ENCODE measurements at regions of chr2 and their contacts with region 1.

Region 1: GRCh38 chr2:164937864-164938401 is 17.4 kb downstream of the SLC38A11 start:
- DNase-seq: no peak
- H3K4me3 Mint-ChIP-seq: peak overlapping the region; percentile 55
- H3K27ac Mint-ChIP-seq: peak overlapping the region; percentile 77
- H3K4me1 Mint-ChIP-seq: peaks cover 27% of the 10 kb centered on the region
- H3K27me3 Mint-ChIP-seq: no peaks in the 10 kb centered on the region
- CTCF ChIP-seq: no peak

Region 2: DNA sequence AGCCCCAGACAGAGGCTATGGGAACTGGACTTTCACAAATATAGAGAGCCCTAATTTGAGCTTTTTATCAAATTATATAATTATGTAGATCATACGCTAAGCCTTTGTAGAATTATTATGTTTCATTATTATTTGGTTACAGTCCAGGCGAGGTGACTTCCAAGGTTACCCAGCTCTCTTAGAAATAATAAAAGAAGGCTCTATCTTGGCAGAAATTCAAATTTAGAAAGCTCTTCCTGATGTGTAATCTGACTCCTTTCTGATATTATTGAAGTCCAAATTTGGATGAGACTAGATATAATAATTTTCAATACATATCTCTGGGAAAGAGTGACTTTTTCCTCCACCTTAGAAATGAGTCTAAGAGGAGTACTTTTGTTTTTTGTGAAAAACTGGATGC is 22.2 kb after region 1 on chr2:
- CTCF ChIA-PET with region 1: interaction called, 5 read pairs
- intact Hi-C with region 1: loop called (anchors 2 kb)
- DNase-seq: no peak
- H3K4me3 Mint-ChIP-seq: no peak overlapping the region
- H3K27ac Mint-ChIP-seq: no peak overlapping the region
- H3K4me1 Mint-ChIP-seq: no peaks in the 10 kb centered on the region
- H3K27me3 Mint-ChIP-seq: no peaks in the 10 kb centered on the region
- CTCF ChIP-seq: no peak

Measured in Calu3 (cell line).